Sigmoid colon (tissue), 7 donors: ENCODE measurements at regions of chr5 and their contacts with region 1.

Region 1: DNA sequence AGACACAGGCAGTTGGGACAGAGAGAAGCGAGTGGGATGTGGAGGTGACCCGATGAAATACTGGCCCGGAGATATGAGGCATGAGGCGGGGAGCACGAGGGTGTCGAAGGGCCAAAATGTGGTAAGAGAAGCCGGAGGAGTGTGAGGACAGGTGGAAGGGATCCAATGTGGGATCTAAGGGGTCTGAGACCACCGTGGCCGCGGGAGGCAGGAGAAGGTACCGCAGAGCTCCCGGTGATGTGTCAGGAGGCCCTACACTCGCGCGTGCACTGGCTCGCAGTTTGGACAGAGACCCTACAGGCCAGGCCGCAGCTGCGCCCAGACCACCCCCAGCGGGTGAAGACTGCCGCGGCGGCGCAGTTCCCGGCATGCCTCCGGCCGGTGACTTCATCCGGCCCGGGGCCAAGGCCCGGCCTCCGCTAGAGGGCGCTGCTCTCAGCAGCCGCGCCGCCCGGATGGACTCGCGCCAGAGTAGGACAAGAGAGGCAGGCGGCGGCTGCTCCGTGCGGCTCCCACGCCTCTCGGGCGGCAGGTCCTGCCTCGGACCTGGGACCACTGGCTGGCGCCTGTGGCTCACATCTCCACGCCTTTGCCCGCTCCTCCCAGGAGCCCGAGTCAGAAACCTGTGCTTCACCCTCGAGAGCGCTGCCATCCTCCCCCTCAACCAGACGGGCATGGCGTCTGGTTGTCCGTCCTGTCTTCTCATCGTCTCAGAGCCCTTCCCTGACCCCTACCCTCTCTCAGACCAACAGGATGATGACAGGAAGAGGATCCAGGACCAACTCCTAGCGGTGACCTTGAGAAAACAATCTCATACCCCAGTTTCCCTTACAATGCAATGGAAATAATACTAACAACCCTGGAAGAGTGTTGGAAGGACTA is 35.4 kb upstream of the STING1 start:
- DNase-seq: peak; percentile 95
- H3K4me3 ChIP-seq: peak overlapping the region; percentile 26 to 56 (median 54)
- H3K27ac ChIP-seq: peak overlapping the region; percentile 72 to 81 (median 79)
- H3K4me1 ChIP-seq: peaks cover 0 to 4% (median 3%) of the 10 kb centered on the region in 4 donors
- H3K27me3 ChIP-seq: no peaks in the 10 kb centered on the region
- CTCF ChIP-seq: peak; percentile 88 to 98 (median 94)
- EP300 ChIP-seq: peak in 1 of 4 donors; percentile 48
- POLR2A ChIP-seq: no peak

Region 2: DNA sequence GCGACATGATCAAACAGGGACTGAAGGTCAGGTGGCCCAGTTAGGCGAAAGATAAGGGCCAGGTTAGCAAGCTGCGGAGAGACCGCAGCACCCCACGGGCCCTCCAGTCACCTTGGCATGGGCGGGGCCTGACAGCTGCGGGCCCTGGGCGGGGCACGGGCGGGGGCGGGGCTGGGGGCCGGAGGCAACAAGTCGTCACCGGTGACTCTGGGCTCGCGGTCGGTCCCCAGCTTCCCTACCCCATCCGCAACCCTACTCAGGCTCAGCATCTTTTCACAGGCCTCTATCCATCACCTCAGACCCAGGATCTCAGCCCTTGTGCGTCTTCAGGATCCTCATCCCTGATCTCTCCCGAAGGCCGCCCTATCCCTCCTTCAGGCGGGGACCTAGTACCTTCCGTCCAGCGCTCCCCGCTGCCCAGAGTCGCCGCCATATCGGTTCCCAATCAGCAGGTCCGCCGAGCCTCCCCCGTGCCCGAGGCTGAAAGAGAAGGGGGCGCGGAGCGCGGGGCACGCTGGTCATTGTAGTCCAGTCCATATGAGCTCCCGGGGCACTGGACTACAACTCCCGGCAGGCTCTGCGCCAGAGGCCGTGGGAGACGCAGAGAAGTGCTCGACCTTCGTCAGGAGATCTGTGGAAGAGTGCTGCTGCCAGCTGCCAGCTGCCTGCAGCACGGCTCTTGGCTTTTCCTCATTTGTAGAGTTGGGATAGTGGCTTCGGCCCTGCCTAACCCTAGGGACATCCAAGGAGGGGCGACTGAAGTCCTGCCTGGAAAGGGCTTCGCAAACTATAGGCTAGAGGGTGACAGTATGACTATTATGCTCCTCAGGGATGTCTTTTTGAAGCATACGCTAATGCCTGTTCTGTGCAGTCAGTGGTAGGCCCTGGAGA is 78.7 kb before region 1 on chr5 and contains the start of gene DNAJC18:
- intact Hi-C with region 1: loop called (anchors 5 kb)
- DNase-seq: peak; percentile 97
- H3K4me3 ChIP-seq: peak within 1 kb of the TSS; percentile 61 to 91 (median 82)
- H3K27ac ChIP-seq: peak within 1 kb of the TSS; percentile 81 to 95 (median 93)
- H3K4me1 ChIP-seq: peaks cover 0 to 14% (median 12%) of the 10 kb centered on the region in 4 donors
- H3K27me3 ChIP-seq: no peaks in the 10 kb centered on the region
- CTCF ChIP-seq: no peak
- EP300 ChIP-seq: peak in 1 of 4 donors; percentile 7
- POLR2A ChIP-seq: no peak
- total RNA-seq, gene DNAJC18: 6.8 to 12.5 (median 10.0) TPM

Region 3: DNA sequence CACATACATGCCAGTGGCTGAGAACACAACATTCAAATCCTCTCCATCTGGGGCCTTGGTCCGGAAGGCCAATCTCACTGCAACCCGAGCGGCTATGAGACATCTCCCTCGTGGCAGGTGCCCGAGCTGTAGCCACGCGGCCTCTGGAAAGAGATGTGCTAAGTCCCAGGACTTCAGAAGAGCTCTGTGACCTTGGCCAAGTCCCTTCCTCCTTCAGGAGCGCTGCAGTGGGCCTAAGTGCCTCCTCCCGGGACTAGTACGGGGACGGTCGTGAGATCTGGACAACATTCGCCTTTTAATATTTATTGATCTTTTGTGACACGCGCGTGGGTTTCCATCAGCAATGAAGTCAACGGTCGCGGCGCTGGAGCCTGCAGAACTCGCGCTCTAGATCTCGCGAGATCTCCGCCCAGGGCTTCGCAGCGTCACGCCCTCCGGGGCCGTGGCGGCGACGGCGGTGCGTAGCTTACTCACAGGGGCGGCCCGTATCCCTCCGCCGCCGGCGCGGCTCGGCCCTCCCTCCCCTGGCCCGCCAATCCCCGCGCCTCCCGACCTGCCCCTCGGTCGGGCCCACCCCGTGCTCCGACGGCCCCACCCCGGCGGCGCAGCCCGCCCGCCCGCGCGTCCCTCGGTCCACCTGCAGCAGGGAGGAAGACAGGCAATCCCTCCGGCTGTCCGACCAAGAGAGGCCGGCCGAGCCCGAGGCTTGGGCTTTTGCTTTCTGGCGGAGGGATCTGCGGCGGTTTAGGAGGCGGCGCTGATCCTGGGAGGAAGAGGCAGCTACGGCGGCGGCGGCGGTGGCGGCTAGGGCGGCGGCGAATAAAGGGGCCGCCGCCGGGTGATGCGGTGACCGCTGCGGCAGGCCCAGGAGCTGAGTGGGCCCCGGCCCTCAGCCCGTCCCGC is 43.1 kb after region 1 on chr5 and contains the start of gene UBE2D2:
- intact Hi-C with region 1: loop called (anchors 1 kb)
- DNase-seq: peak; percentile 99
- H3K4me3 ChIP-seq: peak within 1 kb of the TSS; percentile 81 to 93 (median 90)
- H3K27ac ChIP-seq: peak within 1 kb of the TSS; percentile 94 to 97 (median 96)
- H3K4me1 ChIP-seq: peaks cover 0 to 48% (median 41%) of the 10 kb centered on the region in 4 donors
- H3K27me3 ChIP-seq: no peaks in the 10 kb centered on the region
- CTCF ChIP-seq: no peak
- EP300 ChIP-seq: no peak
- POLR2A ChIP-seq: peak; percentile 62 to 72
- total RNA-seq, gene UBE2D2: 61.5 to 93.0 (median 69.7) TPM